ENCODE measurements at regions of chr18 and their contacts with region 1.

Region 1: DNA sequence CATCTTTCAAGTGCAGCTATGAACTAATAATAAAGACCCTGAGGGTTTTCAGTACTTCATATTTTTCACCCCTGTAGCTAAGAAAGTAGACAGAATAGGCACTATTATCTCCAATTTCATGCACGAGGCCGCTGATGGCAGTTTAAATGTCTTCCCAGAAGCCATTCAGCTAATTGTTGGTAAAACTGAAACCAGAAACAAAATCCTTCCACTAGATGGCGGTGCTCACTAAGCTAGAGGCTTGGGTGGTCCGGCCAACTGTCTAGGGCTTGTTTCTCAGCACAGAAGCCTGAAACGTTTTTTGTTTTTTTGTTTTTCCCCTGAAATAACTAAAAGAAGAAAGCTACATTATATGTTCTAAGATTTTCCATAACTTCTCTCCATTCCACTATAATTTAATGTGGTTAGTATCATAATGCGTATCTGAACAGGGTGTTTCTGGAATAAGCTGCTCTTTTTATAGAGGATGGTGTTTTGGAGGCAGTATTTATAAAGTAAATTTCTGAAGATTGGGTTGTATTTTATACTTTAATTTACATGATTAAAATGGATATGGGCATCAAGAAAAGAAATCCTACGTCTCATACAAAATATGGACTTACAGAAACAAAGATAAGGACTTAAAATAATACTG is 159.4 kb downstream of the PIK3C3 start:
- DNase-seq: peak; percentile 80
- H3K4me3 Mint-ChIP-seq: no peak overlapping the region
- H3K27ac Mint-ChIP-seq: no peak overlapping the region
- H3K4me1 Mint-ChIP-seq: peaks cover 8% of the 10 kb centered on the region
- H3K27me3 Mint-ChIP-seq: no peaks in the 10 kb centered on the region
- CTCF ChIP-seq: peak; percentile 82

Region 2: DNA sequence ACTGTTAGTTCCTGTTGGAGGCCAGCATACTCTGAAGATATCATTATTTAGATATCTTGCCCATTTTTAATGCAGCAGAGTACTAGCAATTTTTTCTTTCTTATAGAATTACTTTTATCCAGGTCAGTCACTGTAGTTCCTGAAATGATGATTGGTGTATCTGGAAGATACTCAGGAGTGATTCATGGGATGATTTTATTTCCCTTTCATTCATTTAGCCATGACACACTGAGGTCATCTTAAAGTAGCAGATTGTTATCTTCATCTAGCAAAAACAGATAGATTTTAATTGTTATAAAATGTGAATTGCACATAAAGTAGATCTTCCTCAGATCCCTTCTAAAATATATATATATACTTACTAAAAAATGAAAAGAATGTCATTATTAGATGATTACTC is 50.3 kb before region 1 on chr18:
- CTCF ChIA-PET with region 1: interaction called, 10 read pairs
- POLR2A ChIA-PET with region 1: interaction called, 3 read pairs
- intact Hi-C with region 1: no loop called
- DNase-seq: no peak
- H3K4me3 Mint-ChIP-seq: no peak overlapping the region
- H3K27ac Mint-ChIP-seq: peak overlapping the region; percentile 46
- H3K4me1 Mint-ChIP-seq: no peaks in the 10 kb centered on the region
- H3K27me3 Mint-ChIP-seq: no peaks in the 10 kb centered on the region
- CTCF ChIP-seq: no peak

Region 3: GRCh38 chr18:42137693-42138375 is 23.4 kb after region 1 on chr18:
- CTCF ChIA-PET with region 1: interaction called, 17 read pairs
- POLR2A ChIA-PET with region 1: no interaction called
- intact Hi-C with region 1: no loop called
- DNase-seq: no peak
- H3K4me3 Mint-ChIP-seq: no peak overlapping the region
- H3K27ac Mint-ChIP-seq: no peak overlapping the region
- H3K4me1 Mint-ChIP-seq: no peaks in the 10 kb centered on the region
- H3K27me3 Mint-ChIP-seq: no peaks in the 10 kb centered on the region
- CTCF ChIP-seq: no peak

Region 4: GRCh38 chr18:42298759-42299675 is 184.6 kb after region 1 on chr18:
- CTCF ChIA-PET with region 1: interaction called, 71 read pairs
- POLR2A ChIA-PET with region 1: no interaction called
- intact Hi-C with region 1: loop called (anchors 2 kb)
- DNase-seq: peak; percentile 75
- H3K4me3 Mint-ChIP-seq: no peak overlapping the region
- H3K27ac Mint-ChIP-seq: no peak overlapping the region
- H3K4me1 Mint-ChIP-seq: no peaks in the 10 kb centered on the region
- H3K27me3 Mint-ChIP-seq: peaks cover 12% of the 10 kb centered on the region
- CTCF ChIP-seq: peak; percentile 81

Region 5: DNA sequence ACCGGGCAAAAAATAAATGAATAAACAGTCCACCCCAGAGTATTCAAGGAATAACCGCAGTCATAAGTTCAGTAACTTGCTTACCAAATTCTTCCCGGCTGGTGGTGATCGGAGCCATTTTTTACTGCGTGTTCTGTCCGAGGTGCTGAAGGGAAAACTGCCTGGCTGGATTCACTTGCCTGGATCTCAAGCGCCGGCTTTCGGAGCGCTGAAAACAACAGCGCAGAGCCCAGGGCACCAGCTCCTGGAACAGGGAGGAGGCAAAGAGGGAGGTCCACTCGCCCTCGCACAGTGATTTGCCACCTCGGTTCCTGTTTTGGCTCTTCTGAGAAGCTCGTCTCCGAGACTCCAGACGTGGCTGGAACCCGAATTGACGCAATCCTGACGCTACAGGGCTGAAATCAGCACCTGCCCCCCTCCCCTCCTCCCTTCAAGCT is 1162.8 kb after region 1 on chr18 and contains the start of gene SYT4:
- CTCF ChIA-PET with region 1: interaction called, 32 read pairs
- POLR2A ChIA-PET with region 1: interaction called, 5 read pairs
- intact Hi-C with region 1: loop called (anchors 5 kb)
- DNase-seq: peak; percentile 56
- H3K4me3 Mint-ChIP-seq: no peak within 1 kb of the TSS
- H3K27ac Mint-ChIP-seq: no peak within 1 kb of the TSS
- H3K4me1 Mint-ChIP-seq: no peaks in the 10 kb centered on the region
- H3K27me3 Mint-ChIP-seq: peaks cover 73% of the 10 kb centered on the region
- CTCF ChIP-seq: no peak
- total RNA-seq, gene SYT4: not detected in 2 replicates

Measured in MCF 10A (cell line).